ENCODE measurements at regions of chr1 and their contacts with region 1.

Region 1: DNA sequence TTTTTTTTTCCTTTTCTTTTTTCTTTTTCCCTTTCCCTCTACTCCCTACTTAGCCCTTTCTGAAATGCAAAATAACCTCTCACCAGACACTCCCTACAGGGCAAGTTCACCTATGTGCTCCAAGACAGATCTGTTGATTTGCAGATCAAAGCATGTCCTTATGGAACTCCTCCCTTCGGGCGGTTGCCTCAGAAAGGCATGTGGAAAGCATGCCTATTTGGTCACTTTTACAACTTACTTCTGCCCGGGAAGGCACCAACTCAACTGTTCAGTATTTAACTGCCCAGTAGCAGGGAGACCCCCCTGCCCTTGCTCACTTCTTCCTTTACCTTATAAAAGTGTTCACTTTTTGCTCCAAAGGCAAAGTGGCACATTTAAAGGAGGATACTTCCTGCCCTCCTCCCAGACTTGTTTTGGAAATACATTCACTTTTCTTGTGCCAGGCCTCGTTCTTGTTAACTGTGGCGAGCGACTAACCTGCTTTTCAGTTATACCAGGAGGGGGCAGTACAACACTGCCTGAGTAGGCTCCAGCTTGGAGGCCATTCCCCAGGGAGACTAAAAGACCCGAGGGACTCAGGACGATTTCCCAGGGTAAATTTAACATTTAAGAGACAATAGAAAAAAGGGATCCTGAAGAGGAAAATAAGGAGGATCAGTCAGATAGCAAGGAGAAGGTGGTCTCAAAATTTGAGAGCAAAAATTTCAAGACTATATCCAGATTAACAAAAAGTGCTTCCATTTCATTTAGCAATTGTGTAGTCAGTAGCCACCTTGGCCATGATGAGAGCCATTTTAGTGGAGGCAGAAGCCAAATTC is 12.3 kb upstream of the SLAMF7 start:
- DNase-seq: peak in 4 of 5 donors; percentile 58 to 82 (median 75)
- H3K4me3 ChIP-seq: no peak overlapping the region
- H3K4me3 Mint-ChIP-seq: no peak overlapping the region
- H3K27ac ChIP-seq: no peak overlapping the region
- H3K27ac Mint-ChIP-seq: no peak overlapping the region
- H3K4me1 ChIP-seq: peaks cover 21% of the 10 kb centered on the region
- H3K4me1 Mint-ChIP-seq: peaks cover 20 to 21% (median 20%) of the 10 kb centered on the region in 3 donors
- H3K27me3 ChIP-seq: no peaks in the 10 kb centered on the region
- H3K27me3 Mint-ChIP-seq: no peaks in the 10 kb centered on the region

Region 2: DNA sequence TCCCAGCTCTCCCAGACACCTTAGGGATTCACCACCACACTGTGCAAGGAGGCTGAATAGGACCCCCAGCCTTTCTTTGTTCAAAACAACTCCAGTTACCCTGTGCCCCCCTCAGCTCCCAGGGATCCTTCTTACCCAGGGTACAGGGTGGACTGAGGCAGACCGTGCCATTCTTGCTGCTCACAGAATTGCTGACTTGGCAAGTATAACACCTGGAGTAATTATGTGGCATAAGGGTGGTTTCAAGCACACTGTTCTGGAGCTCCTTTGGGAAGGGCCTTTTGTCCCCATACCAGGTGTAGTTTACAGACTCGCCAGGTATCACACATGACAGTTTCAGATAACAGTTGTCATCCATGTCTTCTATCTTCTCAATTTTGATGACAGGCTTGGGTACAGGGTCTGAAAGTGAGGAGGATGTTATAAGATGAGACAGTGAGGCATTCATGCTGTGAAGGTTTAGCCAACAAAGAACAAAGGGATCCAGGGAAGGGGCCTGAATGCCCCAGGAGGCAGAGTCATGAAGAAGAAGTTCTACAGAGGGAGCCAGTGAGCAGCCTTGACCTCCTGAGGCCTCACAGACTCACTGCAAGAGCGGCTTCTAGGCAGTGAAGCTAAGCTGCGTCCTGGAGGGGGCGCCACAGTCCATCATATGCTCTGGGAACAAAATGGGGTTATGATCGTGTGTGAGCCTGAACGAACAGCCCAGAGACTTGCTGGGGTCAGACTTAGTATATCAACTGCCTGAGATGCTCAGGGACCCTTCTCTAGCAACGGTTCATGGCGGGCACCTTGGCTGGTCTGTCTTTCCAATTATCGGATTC is 45.4 kb before region 1 on chr1:
- CTCF ChIA-PET with region 1: interaction called, 85 read pairs
- POLR2A ChIA-PET with region 1: no interaction called
- DNase-seq: peak; percentile 77 to 90 (median 81)
- H3K4me3 ChIP-seq: no peak overlapping the region
- H3K4me3 Mint-ChIP-seq: peak overlapping the region in 4 of 7 donors; percentile 2 to 80 (median 6)
- H3K27ac ChIP-seq: no peak overlapping the region
- H3K27ac Mint-ChIP-seq: peak overlapping the region; percentile 87 to 98 (median 94)
- H3K4me1 ChIP-seq: peaks cover 56% of the 10 kb centered on the region
- H3K4me1 Mint-ChIP-seq: peaks cover 58 to 72% (median 72%) of the 10 kb centered on the region in 3 donors
- H3K27me3 ChIP-seq: no peaks in the 10 kb centered on the region
- H3K27me3 Mint-ChIP-seq: no peaks in the 10 kb centered on the region

Region 3: DNA sequence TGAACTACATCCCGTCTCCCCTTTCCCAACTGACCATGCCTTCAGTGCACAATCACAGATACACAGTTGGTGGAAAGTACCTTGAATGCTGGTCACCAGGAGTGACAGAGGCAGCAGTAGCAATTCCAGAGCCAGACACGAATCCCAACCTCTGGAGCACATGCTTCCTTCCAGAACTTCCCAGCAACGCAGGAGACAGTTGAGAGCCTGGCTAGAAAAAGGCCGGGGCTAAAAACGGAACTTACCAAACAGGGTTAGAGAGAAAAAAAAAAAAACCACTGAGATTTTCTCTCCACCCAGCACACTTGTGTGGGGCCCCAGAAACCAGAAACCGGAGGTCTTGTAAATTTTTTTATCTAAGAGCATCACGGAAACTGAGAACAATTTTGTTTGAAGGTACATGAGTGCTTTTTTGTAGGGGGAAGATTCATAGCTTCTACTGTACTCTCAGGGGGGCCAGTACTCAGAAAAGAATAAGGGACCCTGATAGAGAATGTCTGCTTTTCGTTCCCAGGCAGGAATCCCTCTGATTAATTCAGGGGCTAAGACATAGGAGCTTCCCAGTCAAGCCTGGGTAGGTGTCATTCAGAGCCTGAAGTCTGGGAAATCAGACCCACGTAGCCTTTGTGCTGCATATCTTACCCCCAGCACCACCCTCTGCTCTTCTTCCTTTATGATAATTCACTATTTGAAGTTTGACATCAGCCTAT is 14.9 kb before region 1 on chr1 and contains the start of gene CD48:
- CTCF ChIA-PET with region 1: interaction called, 72 read pairs
- POLR2A ChIA-PET with region 1: interaction called, 8 read pairs
- DNase-seq: peak; percentile 27 to 86 (median 78)
- H3K4me3 ChIP-seq: peak within 1 kb of the TSS; percentile 88
- H3K4me3 Mint-ChIP-seq: no peak within 1 kb of the TSS
- H3K27ac ChIP-seq: peak within 1 kb of the TSS; percentile 56
- H3K27ac Mint-ChIP-seq: peak within 1 kb of the TSS in 1 of 8 donors; percentile 89
- H3K4me1 ChIP-seq: peaks cover 70% of the 10 kb centered on the region
- H3K4me1 Mint-ChIP-seq: peaks cover 35 to 49% (median 47%) of the 10 kb centered on the region in 3 donors
- H3K27me3 ChIP-seq: no peaks in the 10 kb centered on the region
- H3K27me3 Mint-ChIP-seq: no peaks in the 10 kb centered on the region
- total RNA-seq, gene CD48: 224 to 234 TPM

Region 4: DNA sequence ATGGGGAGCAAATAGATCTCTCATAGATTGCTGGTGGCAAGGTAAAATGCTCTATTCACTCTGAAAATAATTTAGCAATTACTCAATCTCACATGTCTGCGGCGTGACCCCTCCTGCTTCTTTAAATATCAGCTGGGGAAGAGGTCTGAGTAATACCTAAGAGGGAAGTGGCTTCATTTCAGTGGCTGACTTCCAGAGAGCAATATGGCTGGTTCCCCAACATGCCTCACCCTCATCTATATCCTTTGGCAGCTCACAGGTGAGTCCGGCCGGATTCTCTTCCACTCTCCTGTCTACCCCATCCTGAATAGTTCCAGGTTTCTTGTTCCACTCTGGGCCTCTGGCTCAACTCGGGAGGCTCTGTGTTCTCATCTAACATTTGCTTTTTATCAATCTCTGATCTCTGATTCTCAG is 12.4 kb after region 1 on chr1 and contains the start of gene SLAMF7:
- CTCF ChIA-PET with region 1: interaction called, 13 read pairs
- POLR2A ChIA-PET with region 1: interaction called, 10 read pairs
- DNase-seq: peak in 4 of 5 donors; percentile 31 to 75 (median 46)
- H3K4me3 ChIP-seq: peak within 1 kb of the TSS; percentile 63
- H3K4me3 Mint-ChIP-seq: peak within 1 kb of the TSS; percentile 89 to 98 (median 94)
- H3K27ac ChIP-seq: peak within 1 kb of the TSS; percentile 54
- H3K27ac Mint-ChIP-seq: peak within 1 kb of the TSS; percentile 88 to 98 (median 94)
- H3K4me1 ChIP-seq: peaks cover 37% of the 10 kb centered on the region
- H3K4me1 Mint-ChIP-seq: peaks cover 69 to 73% (median 69%) of the 10 kb centered on the region in 3 donors
- H3K27me3 ChIP-seq: no peaks in the 10 kb centered on the region
- H3K27me3 Mint-ChIP-seq: no peaks in the 10 kb centered on the region
- total RNA-seq, gene SLAMF7: 79.5 to 97.4 TPM

Region 5: DNA sequence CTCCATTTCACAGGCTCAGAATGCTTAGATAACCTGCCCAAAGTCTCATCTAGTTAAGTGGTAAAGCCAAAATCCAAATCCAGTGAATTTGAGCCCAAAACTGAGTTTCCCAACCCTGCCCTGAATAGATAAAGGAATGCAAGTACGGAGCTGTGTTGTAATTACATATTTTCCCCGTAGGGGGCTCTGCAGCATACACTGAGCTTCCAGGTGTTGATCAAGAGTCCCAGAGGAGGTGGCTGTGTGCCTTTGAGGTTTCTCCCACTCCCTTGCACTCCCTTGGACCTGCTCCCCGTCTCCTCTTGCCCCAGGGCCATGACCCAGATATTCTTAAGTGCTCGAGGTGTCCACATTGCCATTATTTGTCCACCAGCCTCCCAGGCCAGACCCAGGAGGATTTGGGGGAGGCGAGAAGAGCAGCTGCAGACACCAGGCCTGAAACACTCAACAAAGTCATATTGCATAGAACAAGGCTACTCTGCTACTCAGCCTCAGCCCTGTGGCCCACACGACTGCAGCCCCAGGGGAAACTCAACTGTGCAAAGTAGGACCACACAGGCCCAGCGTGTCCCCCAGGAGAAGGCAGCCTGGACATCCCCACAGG is 50.9 kb after region 1 on chr1:
- CTCF ChIA-PET with region 1: interaction called, 12 read pairs
- POLR2A ChIA-PET with region 1: no interaction called
- DNase-seq: peak in 4 of 5 donors; percentile 31 to 64 (median 62)
- H3K4me3 ChIP-seq: no peak overlapping the region
- H3K4me3 Mint-ChIP-seq: peak overlapping the region in 1 of 7 donors; percentile 21
- H3K27ac ChIP-seq: no peak overlapping the region
- H3K27ac Mint-ChIP-seq: peak overlapping the region in 3 of 8 donors; percentile 45 to 90 (median 70)
- H3K4me1 ChIP-seq: peaks cover 7% of the 10 kb centered on the region
- H3K4me1 Mint-ChIP-seq: peaks cover 16 to 27% (median 26%) of the 10 kb centered on the region in 3 donors
- H3K27me3 ChIP-seq: no peaks in the 10 kb centered on the region
- H3K27me3 Mint-ChIP-seq: no peaks in the 10 kb centered on the region

Region 6: DNA sequence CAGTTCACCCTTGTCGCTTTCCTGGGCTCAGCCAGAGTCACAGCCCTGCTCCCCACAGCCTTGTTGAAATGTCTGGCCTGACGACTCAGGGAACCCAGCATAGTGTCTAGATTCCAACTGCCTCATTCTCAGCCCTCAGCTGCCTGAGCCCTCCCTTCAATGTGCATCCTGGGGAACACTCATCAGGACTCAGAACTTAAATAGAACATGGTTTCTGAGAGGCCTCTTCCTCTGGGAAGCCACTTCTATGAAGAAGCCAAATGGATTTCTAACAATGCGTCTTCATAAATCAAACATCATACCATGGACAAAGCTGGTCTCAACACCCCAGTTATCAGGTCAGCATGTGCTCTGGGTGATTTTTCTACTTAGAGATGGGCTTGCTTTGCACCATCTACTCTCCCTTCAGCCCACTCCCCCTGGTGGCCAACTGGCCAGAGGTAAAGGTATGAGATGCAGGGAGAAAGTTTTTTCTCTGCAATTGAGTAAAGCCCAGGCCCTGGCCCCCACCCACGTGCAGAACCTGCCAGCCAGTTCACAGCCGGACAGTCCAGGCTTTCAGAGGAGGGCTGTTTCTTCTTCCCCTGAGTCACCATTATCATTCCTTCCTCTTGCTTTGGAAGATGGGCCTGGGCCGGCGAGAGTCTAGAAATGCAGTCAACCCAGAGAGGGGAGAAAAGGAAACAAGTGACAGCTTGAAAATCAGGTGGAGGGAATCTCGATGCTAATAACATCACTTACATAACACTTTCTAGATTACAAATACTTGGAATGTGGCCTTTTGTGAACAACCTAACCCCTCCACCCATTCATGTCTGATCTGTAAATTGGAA is 103.8 kb after region 1 on chr1:
- CTCF ChIA-PET with region 1: interaction called, 27 read pairs
- POLR2A ChIA-PET with region 1: no interaction called
- DNase-seq: peak; percentile 50 to 84 (median 64)
- H3K4me3 ChIP-seq: no peak overlapping the region
- H3K4me3 Mint-ChIP-seq: no peak overlapping the region
- H3K27ac ChIP-seq: no peak overlapping the region
- H3K27ac Mint-ChIP-seq: peak overlapping the region; percentile 18 to 95 (median 78)
- H3K4me1 ChIP-seq: peaks cover 25% of the 10 kb centered on the region
- H3K4me1 Mint-ChIP-seq: peaks cover 32 to 50% (median 49%) of the 10 kb centered on the region in 3 donors
- H3K27me3 ChIP-seq: no peaks in the 10 kb centered on the region
- H3K27me3 Mint-ChIP-seq: no peaks in the 10 kb centered on the region

Region 7: GRCh38 chr1:160951443-160952128 is 224.9 kb after region 1 on chr1:
- CTCF ChIA-PET with region 1: interaction called, 21 read pairs
- POLR2A ChIA-PET with region 1: no interaction called
- DNase-seq: peak; percentile 49 to 74 (median 55)
- H3K4me3 ChIP-seq: no peak overlapping the region
- H3K4me3 Mint-ChIP-seq: no peak overlapping the region
- H3K27ac ChIP-seq: no peak overlapping the region
- H3K27ac Mint-ChIP-seq: peak overlapping the region in 3 of 8 donors; percentile 12 to 36 (median 33)
- H3K4me1 ChIP-seq: peaks cover 3% of the 10 kb centered on the region
- H3K4me1 Mint-ChIP-seq: peaks cover 12 to 26% (median 23%) of the 10 kb centered on the region in 3 donors
- H3K27me3 ChIP-seq: no peaks in the 10 kb centered on the region
- H3K27me3 Mint-ChIP-seq: no peaks in the 10 kb centered on the region